PC-3 (cell line): ENCODE measurements at regions of chr16 and their contacts with region 1.

Region 1: GRCh38 chr16:49350265-49351095 is 23.1 kb upstream of the C16orf78 start:
- DNase-seq: peak; percentile 67
- ATAC-seq: peak; percentile 65
- H3K4me3 ChIP-seq: no peak overlapping the region
- H3K27ac ChIP-seq: no peak overlapping the region
- H3K4me1 ChIP-seq: no peaks in the 10 kb centered on the region
- H3K27me3 ChIP-seq: no peaks in the 10 kb centered on the region
- CTCF ChIP-seq: peak; percentile 79

Region 2: GRCh38 chr16:48687421-48688038 is 663.0 kb before region 1 on chr16:
- CTCF ChIA-PET with region 1: no interaction called
- POLR2A ChIA-PET with region 1: no interaction called
- intact Hi-C with region 1: loop called (anchors 1 kb)
- DNase-seq: peak; percentile 73
- ATAC-seq: peak; percentile 92
- H3K4me3 ChIP-seq: no peak overlapping the region
- H3K27ac ChIP-seq: no peak overlapping the region
- H3K4me1 ChIP-seq: no peaks in the 10 kb centered on the region
- H3K27me3 ChIP-seq: peaks cover 13% of the 10 kb centered on the region
- CTCF ChIP-seq: peak; percentile 74

Region 3: DNA sequence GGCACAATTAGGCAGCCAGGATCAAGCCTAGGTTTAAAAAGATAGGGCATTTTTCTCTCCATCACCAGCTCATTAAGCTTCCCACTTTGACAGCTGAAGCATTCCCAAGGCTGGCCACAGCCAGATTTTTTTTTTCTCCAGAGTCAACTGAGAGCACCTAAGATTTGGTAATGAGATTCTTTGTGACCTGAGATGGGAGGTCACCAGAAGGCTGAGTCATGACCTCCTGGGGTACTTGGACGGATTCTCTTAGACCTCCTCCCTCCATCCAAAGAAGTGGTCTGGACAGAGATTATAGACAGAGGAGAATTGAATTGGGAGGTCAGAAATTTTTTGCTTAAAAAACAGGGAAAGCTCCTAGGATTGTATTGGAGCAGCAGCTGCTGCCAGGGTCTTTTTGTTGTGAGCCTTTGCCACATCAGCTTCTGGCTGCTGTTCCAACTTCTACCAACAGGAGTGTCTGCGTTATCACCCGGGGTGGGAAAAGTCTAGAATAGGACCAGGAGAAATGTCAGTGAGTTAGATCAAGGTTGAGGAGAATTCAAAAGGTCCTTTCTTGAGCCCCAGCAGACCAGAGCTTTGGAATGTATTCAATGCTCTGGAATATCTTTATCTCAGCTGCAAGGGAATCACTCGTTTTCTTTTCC is 519.3 kb before region 1 on chr16:
- CTCF ChIA-PET with region 1: no interaction called
- POLR2A ChIA-PET with region 1: no interaction called
- intact Hi-C with region 1: loop called (anchors 5 kb)
- DNase-seq: peak; percentile 35
- ATAC-seq: no peak
- H3K4me3 ChIP-seq: no peak overlapping the region
- H3K27ac ChIP-seq: no peak overlapping the region
- H3K4me1 ChIP-seq: no peaks in the 10 kb centered on the region
- H3K27me3 ChIP-seq: no peaks in the 10 kb centered on the region
- CTCF ChIP-seq: 0 out of 2 replicates have a peak, but pooled peaks have one; percentile 27

Region 4: DNA sequence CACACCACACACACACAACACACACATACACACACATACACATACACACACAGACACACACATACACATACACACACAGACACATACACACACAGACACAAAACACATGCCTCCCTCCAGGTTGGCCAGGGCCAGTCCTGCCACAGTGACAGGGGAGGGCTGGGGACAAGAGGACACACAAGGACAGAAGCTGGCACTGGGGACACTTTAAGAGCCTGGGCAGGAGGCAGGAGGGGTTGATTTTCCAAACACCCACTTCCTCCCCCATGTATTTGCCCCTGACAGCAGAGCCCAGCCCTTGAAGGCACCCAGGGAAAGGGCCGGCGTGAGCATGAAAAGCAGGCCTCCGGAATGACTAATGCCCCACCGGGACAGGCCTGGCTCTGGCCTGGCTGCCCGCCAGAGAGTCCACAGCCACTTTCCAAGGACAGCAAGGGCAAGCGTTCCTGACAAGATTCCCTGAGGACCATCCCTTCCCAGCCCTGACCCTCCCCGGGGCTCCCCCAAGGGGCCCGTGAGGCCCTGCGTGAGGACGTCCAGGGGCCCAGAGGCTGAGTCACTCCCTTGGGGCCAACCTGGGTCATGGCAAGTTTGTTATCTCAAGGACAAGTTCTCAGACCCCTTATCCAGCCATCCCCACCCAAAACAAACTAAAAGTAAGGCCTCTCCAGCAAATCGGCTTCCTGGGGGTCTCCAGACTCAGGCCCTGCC is 269.8 kb after region 1 on chr16:
- CTCF ChIA-PET with region 1: no interaction called
- POLR2A ChIA-PET with region 1: no interaction called
- intact Hi-C with region 1: no loop called
- DNase-seq: peak; percentile 33
- ATAC-seq: no peak
- H3K4me3 ChIP-seq: no peak overlapping the region
- H3K27ac ChIP-seq: no peak overlapping the region
- H3K4me1 ChIP-seq: no peaks in the 10 kb centered on the region
- H3K27me3 ChIP-seq: no peaks in the 10 kb centered on the region
- CTCF ChIP-seq: no peak

Region 5: DNA sequence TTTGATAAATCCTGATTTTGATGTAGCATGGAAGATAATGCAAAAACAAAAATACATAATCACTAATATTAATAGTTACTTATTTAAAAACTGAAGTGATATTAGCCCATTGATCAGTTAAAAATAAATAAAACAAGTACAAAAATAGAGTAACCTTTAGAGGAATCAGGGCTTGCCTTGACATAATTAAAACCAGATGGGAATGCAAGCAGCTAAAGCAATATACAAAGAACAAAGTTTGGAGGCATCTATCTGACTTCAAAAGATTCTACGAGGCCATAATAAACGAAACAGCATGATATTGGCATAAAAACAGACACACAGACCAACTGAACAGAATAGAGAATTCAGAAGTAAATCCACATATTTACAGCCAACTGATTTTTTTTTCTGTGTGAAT is 700.3 kb after region 1 on chr16:
- CTCF ChIA-PET with region 1: no interaction called
- POLR2A ChIA-PET with region 1: no interaction called
- intact Hi-C with region 1: no loop called
- DNase-seq: no peak
- ATAC-seq: no peak
- H3K4me3 ChIP-seq: no peak overlapping the region
- H3K27ac ChIP-seq: no peak overlapping the region
- H3K4me1 ChIP-seq: no peaks in the 10 kb centered on the region
- H3K27me3 ChIP-seq: no peaks in the 10 kb centered on the region
- CTCF ChIP-seq: no peak

Region 6: GRCh38 chr16:50948268-50948930 is 1597.9 kb after region 1 on chr16:
- CTCF ChIA-PET with region 1: no interaction called
- POLR2A ChIA-PET with region 1: no interaction called
- intact Hi-C with region 1: no loop called
- DNase-seq: no peak
- ATAC-seq: no peak
- H3K4me3 ChIP-seq: no peak overlapping the region
- H3K27ac ChIP-seq: no peak overlapping the region
- H3K4me1 ChIP-seq: no peaks in the 10 kb centered on the region
- H3K27me3 ChIP-seq: no peaks in the 10 kb centered on the region
- CTCF ChIP-seq: no peak